CD14-positive monocyte (primary cell): ENCODE measurements at regions of chr20 and their contacts with region 1.

Region 1: DNA sequence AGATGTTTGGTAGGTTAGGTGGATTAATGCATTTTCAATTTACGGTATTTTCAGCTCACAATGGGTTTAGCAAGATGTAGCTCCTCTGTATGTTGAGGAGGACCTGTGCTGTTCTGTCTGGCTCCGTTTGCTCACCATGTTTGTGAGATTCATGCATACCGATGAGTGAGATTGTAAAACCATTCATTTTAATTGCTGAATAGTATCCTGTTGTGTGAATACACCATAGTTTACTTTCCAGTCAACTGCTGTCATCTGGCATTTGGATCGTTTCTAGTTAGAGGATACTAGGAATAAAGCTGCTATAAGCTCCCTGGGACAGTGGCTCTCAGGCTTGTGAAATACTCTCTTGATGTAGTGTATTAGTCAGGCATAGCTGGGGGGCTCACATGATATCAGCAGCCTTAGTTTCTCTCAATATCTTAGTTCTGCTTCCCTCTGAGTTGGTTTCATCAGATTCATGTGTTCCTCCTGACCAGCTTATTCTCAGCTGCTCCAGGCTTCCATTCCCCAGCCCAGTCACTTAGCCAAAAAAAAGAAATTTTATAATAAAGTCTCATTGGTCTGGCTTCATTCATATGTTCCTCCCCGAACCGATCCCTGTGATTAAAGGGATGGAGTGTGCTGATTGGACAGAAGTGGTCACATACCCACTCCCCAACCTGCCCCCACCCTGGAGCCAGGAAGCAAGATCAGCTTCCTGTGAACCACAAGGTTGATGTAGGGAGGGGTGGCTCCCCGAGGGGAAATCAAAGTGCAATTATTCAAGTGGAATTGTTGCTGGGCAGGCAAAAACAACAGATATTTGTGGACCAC is 10.9 kb upstream of the B4GALT5 start:
- DNase-seq: peak; percentile 63 to 92 (median 90)
- H3K4me3 ChIP-seq: peak overlapping the region in 1 of 3 experiments; percentile 0
- H3K4me3 Mint-ChIP-seq: peak overlapping the region; percentile 47 to 55
- H3K27ac ChIP-seq: peak overlapping the region; percentile 58 to 65
- H3K27ac Mint-ChIP-seq: peak overlapping the region; percentile 81 to 95 (median 89)
- H3K4me1 ChIP-seq: peaks cover 54 to 56% of the 10 kb centered on the region in 2 donors
- H3K4me1 Mint-ChIP-seq: peaks cover 49% of the 10 kb centered on the region
- H3K27me3 ChIP-seq: no peaks in the 10 kb centered on the region
- H3K27me3 Mint-ChIP-seq: peaks cover 0 to 3% (median 0%) of the 10 kb centered on the region in 3 donors
- CTCF ChIP-seq: no peak

Region 2: DNA sequence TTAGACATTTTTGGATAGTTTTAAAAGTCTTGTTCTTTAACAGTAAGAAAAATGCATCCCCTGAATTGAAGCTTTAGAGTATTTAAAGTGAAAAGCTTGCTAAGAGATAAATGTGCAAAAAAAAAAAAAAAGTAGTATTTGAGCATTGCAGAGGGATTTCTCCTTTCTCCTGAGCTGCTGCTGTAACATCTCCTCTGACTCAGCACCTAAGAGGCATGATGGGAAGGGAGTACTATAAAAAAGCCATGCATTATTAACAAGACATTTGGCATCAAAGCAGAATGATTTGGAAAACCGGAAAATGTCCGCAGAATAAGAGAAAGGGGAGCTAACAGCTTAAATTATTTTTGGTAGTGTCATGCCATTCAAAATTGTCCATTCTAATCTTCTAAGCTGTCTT is 38.8 kb before region 1 on chr20:
- intact Hi-C with region 1: no loop called
- DNase-seq: peak in 2 of 3 donors; percentile 42 to 51
- H3K4me3 ChIP-seq: no peak overlapping the region
- H3K4me3 Mint-ChIP-seq: no peak overlapping the region
- H3K27ac ChIP-seq: peak overlapping the region in 1 of 2 donors; percentile 57
- H3K27ac Mint-ChIP-seq: peak overlapping the region in 2 of 7 donors; percentile 2 to 33
- H3K4me1 ChIP-seq: peaks cover 46 to 50% of the 10 kb centered on the region in 2 donors
- H3K4me1 Mint-ChIP-seq: peaks cover 71% of the 10 kb centered on the region
- H3K27me3 ChIP-seq: no peaks in the 10 kb centered on the region
- H3K27me3 Mint-ChIP-seq: peaks cover 0 to 1% (median 0%) of the 10 kb centered on the region in 3 donors
- CTCF ChIP-seq: no peak

Region 3: GRCh38 chr20:49742948-49743347 is 18.3 kb after region 1 on chr20:
- intact Hi-C with region 1: no loop called
- DNase-seq: no peak
- H3K4me3 ChIP-seq: no peak overlapping the region
- H3K4me3 Mint-ChIP-seq: no peak overlapping the region
- H3K27ac ChIP-seq: no peak overlapping the region
- H3K27ac Mint-ChIP-seq: peak overlapping the region in 1 of 7 donors; percentile 85
- H3K4me1 ChIP-seq: no peaks in the 10 kb centered on the region
- H3K4me1 Mint-ChIP-seq: peaks cover 9% of the 10 kb centered on the region
- H3K27me3 ChIP-seq: no peaks in the 10 kb centered on the region
- H3K27me3 Mint-ChIP-seq: peaks cover 1 to 3% (median 2%) of the 10 kb centered on the region in 3 donors
- CTCF ChIP-seq: no peak

Region 4: DNA sequence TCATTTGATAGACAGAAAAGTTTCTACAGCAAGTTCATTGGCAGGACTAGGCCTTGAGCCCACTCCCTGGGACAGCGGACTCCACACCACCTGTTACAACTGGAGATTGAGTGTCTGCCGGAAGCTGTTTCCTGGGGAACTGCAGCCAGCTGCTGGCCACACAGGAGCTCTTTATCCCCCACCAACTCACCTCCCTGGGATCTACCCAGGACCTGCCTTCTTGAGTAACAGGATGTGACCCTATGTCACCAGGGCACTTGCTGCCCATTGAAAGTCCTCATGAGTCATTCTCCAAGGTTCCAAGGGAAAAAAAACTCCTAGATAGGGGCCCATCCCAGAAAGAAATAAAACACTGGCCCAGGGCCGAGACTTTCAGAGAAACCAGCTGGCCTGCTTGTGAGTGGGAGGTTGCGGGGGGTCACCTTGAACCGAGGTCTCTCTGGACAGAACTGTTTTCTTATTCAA is 50.6 kb after region 1 on chr20:
- intact Hi-C with region 1: loop called (anchors 5 to 10 kb)
- DNase-seq: peak in 2 of 3 donors; percentile 75 to 93
- H3K4me3 ChIP-seq: no peak overlapping the region
- H3K4me3 Mint-ChIP-seq: no peak overlapping the region
- H3K27ac ChIP-seq: peak overlapping the region; percentile 3 to 9
- H3K27ac Mint-ChIP-seq: peak overlapping the region; percentile 53 to 87 (median 76)
- H3K4me1 ChIP-seq: peaks cover 42 to 46% of the 10 kb centered on the region in 2 donors
- H3K4me1 Mint-ChIP-seq: peaks cover 51% of the 10 kb centered on the region
- H3K27me3 ChIP-seq: no peaks in the 10 kb centered on the region
- H3K27me3 Mint-ChIP-seq: no peaks in the 10 kb centered on the region
- CTCF ChIP-seq: no peak

Region 5: GRCh38 chr20:50399917-50400704 is 675.5 kb after region 1 on chr20:
- intact Hi-C with region 1: no loop called
- DNase-seq: peak; percentile 70 to 89 (median 78)
- H3K4me3 ChIP-seq: peak overlapping the region in 1 of 3 experiments; percentile 36
- H3K4me3 Mint-ChIP-seq: peak overlapping the region; percentile 3 to 48
- H3K27ac ChIP-seq: peak overlapping the region in 1 of 2 donors; percentile 29
- H3K27ac Mint-ChIP-seq: peak overlapping the region; percentile 57 to 88 (median 79)
- H3K4me1 ChIP-seq: peaks cover 25 to 34% of the 10 kb centered on the region in 2 donors
- H3K4me1 Mint-ChIP-seq: peaks cover 33% of the 10 kb centered on the region
- H3K27me3 ChIP-seq: no peaks in the 10 kb centered on the region
- H3K27me3 Mint-ChIP-seq: peaks cover 0 to 5% (median 4%) of the 10 kb centered on the region in 3 donors
- CTCF ChIP-seq: no peak